ENCODE measurements at regions of chr13 and their contacts with region 1.

Region 1: GRCh38 chr13:28138012-28138755 is at the start of gene PAN3:
- H3K4me3 Mint-ChIP-seq: peak within 1 kb of the TSS; percentile 83
- H3K27ac Mint-ChIP-seq: peak within 1 kb of the TSS; percentile 99
- H3K4me1 Mint-ChIP-seq: peaks cover 58% of the 10 kb centered on the region
- H3K27me3 Mint-ChIP-seq: no peaks in the 10 kb centered on the region

Region 2: GRCh38 chr13:27461940-27462584 is 676.1 kb before region 1 on chr13:
- intact Hi-C with region 1: no loop called
- H3K4me3 Mint-ChIP-seq: no peak overlapping the region
- H3K27ac Mint-ChIP-seq: no peak overlapping the region
- H3K4me1 Mint-ChIP-seq: no peaks in the 10 kb centered on the region
- H3K27me3 Mint-ChIP-seq: peaks cover 2% of the 10 kb centered on the region

Region 3: DNA sequence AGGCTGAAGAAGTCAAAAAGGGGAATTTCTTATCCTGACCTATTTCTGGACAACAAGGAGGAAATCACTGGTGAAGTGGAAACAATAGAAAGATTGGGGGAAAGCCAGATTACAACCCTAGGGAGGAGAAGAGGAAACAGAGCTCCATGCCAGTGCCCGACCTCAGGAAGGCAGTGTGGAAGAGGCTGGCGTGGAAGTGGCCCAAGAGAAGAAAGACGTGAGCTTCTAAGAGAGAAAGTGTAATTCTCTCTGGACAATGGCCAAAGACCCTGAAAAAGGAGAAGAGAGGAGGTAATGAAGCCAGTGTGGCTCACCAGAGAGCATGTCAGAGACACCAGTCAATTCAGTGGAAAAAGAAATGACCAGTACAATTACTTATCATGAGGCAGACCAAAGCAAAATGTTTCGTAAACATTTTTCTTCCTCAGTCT is 97.1 kb before region 1 on chr13:
- intact Hi-C with region 1: loop called (anchors 5 kb)
- H3K4me3 Mint-ChIP-seq: peak overlapping the region; percentile 0
- H3K27ac Mint-ChIP-seq: peak overlapping the region; percentile 58
- H3K4me1 Mint-ChIP-seq: peaks cover 66% of the 10 kb centered on the region
- H3K27me3 Mint-ChIP-seq: no peaks in the 10 kb centered on the region

Region 4: DNA sequence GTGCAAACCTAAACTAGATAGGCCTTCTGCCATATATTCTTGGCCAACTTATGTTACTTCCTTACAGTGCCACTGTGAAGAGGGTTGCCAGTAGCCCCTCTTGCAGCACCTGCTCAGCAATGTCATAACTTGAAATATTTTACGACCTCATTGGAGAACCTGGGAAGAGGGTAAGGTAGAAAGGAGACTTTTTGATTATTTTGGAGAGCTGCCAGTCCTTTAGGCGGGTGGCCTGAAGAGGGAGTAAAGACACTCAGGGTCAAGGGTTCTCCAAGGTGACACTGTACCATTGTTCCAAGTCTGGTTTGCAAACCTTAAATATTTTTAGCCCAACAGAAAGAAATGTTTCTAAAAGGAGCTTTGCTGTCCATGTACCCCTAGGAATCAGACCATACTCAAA is 238.4 kb after region 1 on chr13:
- intact Hi-C with region 1: no loop called
- H3K4me3 Mint-ChIP-seq: no peak overlapping the region
- H3K27ac Mint-ChIP-seq: no peak overlapping the region
- H3K4me1 Mint-ChIP-seq: peaks cover 22% of the 10 kb centered on the region
- H3K27me3 Mint-ChIP-seq: peaks cover 66% of the 10 kb centered on the region